ENCODE measurements at regions of chr22 and their contacts with region 1.

Region 1: GRCh38 chr22:49852898-49853894 is at the start of gene ZBED4:
- DNase-seq: peak; percentile 97 to 100 (median 98)
- ATAC-seq: peak; percentile 94 to 96 (median 96)
- H3K4me3 ChIP-seq: peak within 1 kb of the TSS; percentile 63 to 95 (median 85)
- H3K27ac ChIP-seq: peak within 1 kb of the TSS; percentile 79 to 97 (median 95)
- H3K4me1 ChIP-seq: peaks cover 8 to 48% (median 30%) of the 10 kb centered on the region in 12 donors
- H3K27me3 ChIP-seq: peaks cover 15 to 26% (median 23%) of the 10 kb centered on the region in 9 donors
- CTCF ChIP-seq: no peak
- POLR2A ChIP-seq: peak; percentile 12 to 88
- total RNA-seq, gene ZBED4: 2.9 to 8.6 (median 4.9) TPM

Region 2: GRCh38 chr22:49789289-49790141 is 63.7 kb before region 1 on chr22:
- intact Hi-C with region 1: loop called in 2 of 10 experiments (anchors 10 kb)
- DNase-seq: peak in 3 of 5 donors; percentile 41 to 70 (median 57)
- ATAC-seq: peak in 3 of 4 donors; percentile 40 to 55 (median 51)
- H3K4me3 ChIP-seq: peak overlapping the region in 8 of 12 donors; percentile 1 to 29 (median 14)
- H3K27ac ChIP-seq: peak overlapping the region; percentile 7 to 86 (median 75)
- H3K4me1 ChIP-seq: peaks cover 12 to 75% (median 67%) of the 10 kb centered on the region in 12 donors
- H3K27me3 ChIP-seq: no peaks in the 10 kb centered on the region
- CTCF ChIP-seq: no peak
- POLR2A ChIP-seq: no peak

Region 3: GRCh38 chr22:49827853-49828598 is 25.2 kb before region 1 on chr22 and contains the start of gene BRD1:
- intact Hi-C with region 1: loop called in 2 of 10 experiments (anchors 2 kb)
- DNase-seq: peak; percentile 66 to 85 (median 76)
- ATAC-seq: peak in 3 of 4 donors; percentile 73 to 80 (median 77)
- H3K4me3 ChIP-seq: peak within 1 kb of the TSS; percentile 60 to 99 (median 86)
- H3K27ac ChIP-seq: peak within 1 kb of the TSS; percentile 68 to 91 (median 86)
- H3K4me1 ChIP-seq: peaks cover 10 to 33% (median 23%) of the 10 kb centered on the region in 12 donors
- H3K27me3 ChIP-seq: no peaks in the 10 kb centered on the region
- CTCF ChIP-seq: no peak
- POLR2A ChIP-seq: no peak
- total RNA-seq, gene BRD1: 13.9 to 27.0 (median 18.5) TPM

Region 4: DNA sequence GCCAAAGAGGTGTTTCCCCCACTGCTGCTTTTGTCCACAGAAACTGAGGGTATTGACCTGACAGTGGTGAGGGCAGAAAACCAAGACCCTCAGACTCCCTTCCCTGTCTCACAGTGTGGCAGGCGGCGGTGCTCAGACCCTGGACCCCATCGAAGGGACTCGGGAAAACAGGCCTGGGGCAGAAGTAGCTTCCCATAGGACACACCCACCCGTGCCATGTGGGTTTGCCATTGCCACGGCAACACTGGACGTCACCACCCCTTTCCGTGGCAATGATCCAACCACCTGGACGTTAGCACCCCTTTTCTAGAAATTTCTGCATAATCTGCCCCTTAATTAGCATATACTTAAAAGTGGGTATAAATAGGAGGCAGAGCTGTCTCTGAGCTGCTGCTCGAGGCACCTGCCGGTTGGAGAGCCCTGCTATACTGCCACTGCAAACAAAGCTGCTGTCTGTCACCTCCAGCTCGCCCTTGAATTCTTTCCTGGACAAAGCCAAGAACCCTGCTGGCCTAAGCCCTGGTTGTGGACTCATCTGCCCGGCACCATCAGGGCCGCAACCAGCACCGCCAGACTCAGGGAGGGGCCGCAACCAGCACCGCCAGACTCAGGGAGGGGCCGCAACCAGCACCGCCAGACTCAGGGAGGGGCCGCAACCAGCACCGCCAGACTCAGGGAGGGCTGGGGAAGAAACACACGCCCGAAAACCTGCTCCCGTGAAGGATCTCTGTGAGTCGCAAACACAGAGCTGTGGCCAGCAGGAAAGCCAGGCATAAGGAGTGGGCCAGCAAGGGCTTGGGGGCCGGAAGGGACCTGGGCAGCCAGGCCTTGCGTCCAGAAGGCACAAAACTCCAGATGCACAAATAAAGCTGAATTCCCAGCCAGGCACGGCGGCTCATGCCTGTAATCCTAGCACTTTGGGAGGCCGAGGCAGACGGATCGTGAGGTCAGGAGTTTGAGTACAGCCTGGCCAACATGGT is 221.6 kb after region 1 on chr22:
- intact Hi-C with region 1: no loop called
- DNase-seq: no peak
- ATAC-seq: peak in 1 of 4 donors; percentile 41
- H3K4me3 ChIP-seq: no peak overlapping the region
- H3K27ac ChIP-seq: no peak overlapping the region
- H3K4me1 ChIP-seq: no peaks in the 10 kb centered on the region
- H3K27me3 ChIP-seq: peaks cover 0 to 20% (median 0%) of the 10 kb centered on the region in 9 donors
- CTCF ChIP-seq: no peak
- POLR2A ChIP-seq: no peak

Measured in heart left ventricle (tissue), 16 donors.